Right lobe of liver (tissue), 6 donors: ENCODE measurements at regions of chr2 and their contacts with region 1.

Region 1: GRCh38 chr2:240913810-240914644 is 7.9 kb downstream of the CROCC2 start:
- DNase-seq: peak in 2 of 3 donors; percentile 64 to 67
- ATAC-seq: peak; percentile 67 to 77 (median 71)
- H3K4me3 ChIP-seq: no peak overlapping the region
- H3K27ac ChIP-seq: no peak overlapping the region
- H3K4me1 ChIP-seq: peaks cover 0 to 8% (median 0%) of the 10 kb centered on the region in 4 donors
- H3K27me3 ChIP-seq: no peaks in the 10 kb centered on the region
- CTCF ChIP-seq: peak; percentile 70 to 91 (median 86)
- POLR2A ChIP-seq: no peak

Region 2: DNA sequence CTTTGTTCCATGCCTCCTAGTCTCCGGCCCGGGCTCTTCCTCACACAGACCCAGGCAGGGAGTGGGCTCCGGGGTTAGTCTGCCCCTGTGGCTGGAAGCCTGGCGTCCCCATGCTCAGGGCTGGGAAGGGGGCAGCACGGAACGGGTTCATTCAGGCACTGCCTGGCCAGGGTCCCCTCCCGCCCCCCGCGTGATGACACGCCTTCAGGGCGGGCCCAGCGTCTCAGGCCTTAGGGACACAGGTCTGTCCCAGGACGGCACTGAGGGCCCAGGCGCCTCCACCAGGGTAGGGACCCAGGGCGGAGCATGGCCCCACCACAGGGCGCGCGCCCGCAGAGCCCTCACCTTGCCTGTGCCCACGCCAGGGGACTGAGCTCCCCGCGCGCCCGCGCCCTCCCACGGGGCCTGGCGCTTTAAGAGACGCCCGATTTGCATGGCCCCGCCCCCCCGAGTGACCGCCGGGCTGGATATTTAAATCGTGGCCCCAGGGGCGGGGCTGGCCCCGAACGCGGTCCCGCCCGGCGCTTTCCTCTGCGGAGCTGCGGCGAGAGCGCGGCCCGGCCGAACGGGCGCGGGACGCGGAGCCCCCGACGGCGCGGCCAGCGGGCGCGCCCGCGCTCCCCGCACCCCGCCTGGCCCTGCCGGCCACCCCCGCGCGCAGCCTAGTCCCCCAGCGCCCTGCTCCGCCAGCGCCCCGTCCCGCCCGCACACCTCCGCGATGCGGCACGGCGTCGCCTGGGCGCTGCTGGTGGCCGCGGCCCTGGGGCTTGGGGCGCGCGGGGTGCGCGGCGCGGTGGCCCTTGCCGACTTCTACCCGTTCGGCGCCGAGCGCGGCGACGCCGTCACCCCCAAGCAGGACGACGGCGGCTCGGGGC is 84.3 kb after region 1 on chr2 and contains the start of gene SNED1:
- intact Hi-C with region 1: loop called in 1 of 2 experiments (anchors 10 kb)
- DNase-seq: peak; percentile 93 to 94 (median 93)
- ATAC-seq: peak; percentile 76 to 87 (median 82)
- H3K4me3 ChIP-seq: peak within 1 kb of the TSS; percentile 57 to 88 (median 77)
- H3K27ac ChIP-seq: peak within 1 kb of the TSS; percentile 75 to 91 (median 75)
- H3K4me1 ChIP-seq: peaks cover 0 to 57% (median 23%) of the 10 kb centered on the region in 4 donors
- H3K27me3 ChIP-seq: no peaks in the 10 kb centered on the region
- CTCF ChIP-seq: no peak
- POLR2A ChIP-seq: peak; percentile 58
- total RNA-seq, gene SNED1: 7.4 to 27.8 (median 13.2) TPM